Posterior cingulate gyrus (tissue), 11 donors: ENCODE measurements at regions of chr14 and their contacts with region 1.

Region 1: GRCh38 chr14:75527449-75528163 is 5.3 kb downstream of the BATF start:
- DNase-seq: no peak

Region 2: DNA sequence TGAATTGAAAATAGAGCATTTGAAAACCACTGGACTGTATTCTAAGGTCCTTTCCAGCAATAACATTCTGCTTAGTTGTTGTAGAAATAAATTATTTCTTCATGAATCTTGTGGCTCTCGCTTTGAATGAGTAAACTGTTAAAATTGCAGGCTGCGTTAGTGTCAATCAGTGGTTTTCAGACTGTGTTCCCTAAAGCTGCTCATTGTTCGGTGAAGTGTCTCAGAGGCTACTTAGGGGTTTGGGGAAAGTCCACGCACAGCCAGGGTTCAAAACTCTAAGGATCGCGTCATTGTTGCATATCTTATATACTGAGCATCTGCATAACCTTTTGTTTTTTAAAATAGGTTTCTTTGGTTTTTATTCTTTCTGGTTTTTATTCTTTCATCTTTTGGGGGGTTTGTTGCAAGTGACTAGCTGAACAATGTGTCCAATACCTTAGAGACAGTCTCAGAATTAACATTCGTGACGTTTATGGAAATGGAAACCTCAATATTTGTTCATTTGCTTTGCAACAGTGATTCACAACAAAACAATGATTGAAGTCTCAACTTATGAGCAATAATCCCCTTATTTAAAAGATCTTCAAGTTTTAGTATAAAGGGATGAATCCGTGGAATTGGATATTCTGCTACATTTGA is 241.6 kb after region 1 on chr14:
- intact Hi-C with region 1: no loop called
- DNase-seq: no peak

Region 3: DNA sequence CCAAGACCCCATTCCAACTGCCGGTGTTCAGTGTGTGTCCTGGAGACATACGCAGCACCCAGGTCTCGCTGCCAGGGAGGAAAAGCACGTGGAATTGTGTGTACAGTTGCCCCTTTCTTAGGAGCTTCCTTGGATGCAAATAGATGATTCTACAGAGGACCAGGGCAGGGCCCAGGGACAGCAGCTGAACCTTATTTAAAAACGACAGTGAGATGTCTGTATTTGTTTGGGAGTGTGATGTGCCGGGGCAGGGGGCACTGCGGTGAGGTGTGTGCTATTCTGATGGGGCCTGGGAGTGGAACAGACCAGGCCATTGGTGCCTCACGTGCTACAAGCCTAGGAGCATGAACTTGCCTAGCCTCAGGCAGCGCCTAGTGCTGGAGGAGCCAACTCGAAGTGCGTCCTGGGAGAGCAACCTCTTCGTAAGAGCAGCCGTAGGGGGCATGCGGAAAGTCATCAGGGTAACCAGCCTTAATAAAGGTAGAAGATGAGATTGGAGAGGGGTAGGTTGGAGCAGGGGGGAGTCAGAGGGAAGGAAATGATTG is 750.1 kb after region 1 on chr14:
- intact Hi-C with region 1: loop called (anchors 5 kb)
- DNase-seq: no peak